ENCODE measurements at regions of chr1 and their contacts with region 1.

Region 1: DNA sequence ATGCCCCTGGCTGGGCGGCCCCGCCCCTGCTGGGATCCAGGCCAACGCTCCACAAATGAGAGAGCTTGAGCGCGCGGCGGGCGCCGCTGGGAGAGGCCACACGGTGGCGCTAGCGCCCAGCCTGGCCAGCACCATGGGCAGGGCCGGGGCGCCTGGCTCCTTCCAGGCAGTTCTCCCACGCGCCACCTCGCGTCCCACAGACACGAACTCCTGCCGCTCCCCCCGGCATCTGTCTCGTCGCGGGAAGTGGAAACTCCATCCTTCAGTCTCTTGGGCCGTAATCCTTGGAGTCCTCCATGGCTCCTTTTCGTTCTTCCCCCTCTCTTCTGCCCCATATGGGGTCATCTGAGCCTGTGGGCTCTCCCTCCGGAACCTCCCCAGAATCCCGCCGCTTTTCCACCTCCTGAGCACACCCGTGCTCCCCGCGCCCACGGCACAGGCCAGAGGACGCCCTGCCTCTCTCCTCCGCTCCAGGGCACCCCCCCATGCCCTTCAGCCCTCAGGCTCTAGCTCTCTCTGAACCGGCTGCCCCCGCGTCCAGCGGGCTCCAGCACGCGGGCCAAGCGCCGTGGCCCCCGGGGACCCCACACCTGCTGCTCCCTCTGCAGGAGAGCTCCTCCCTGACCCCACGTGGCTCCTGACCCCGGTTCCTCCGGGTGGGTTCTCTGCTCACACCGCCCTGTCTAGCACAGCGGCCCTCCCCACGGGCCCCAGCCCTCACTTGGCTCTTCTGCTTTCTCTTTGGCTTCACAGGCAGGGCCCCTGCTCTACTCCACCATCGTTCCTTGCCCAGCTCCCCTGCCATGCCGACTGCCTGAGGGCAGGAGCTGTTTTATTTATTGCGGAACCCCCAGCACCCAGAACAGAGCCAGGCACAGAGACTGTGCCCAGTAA is 31.9 kb upstream of the EDN2 start:
- DNase-seq: peak; percentile 97
- H3K4me3 ChIP-seq: peak overlapping the region; percentile 21 to 44; a peak in 2 of 4 replicates
- H3K27ac ChIP-seq: no peak overlapping the region; a peak in 1 of 4 replicates
- H3K4me1 ChIP-seq: peaks cover 4 to 48% of the 10 kb centered on the region in 2 experiments; a peak in 3 of 4 replicates
- H3K27me3 ChIP-seq: no peaks in the 10 kb centered on the region
- CTCF ChIP-seq: peak; percentile 73
- EP300 ChIP-seq: peak in 1 of 2 experiments; percentile 9; a peak in 1 of 4 replicates
- RAD21 ChIP-seq: peak; percentile 76

Region 2: GRCh38 chr1:40668769-40669525 is 847.5 kb before region 1 on chr1:
- CTCF ChIA-PET with region 1: no interaction called
- POLR2A ChIA-PET with region 1: no interaction called
- DNase-seq: peak; percentile 85
- H3K4me3 ChIP-seq: peak overlapping the region; percentile 23 to 33; a peak in 2 of 4 replicates
- H3K27ac ChIP-seq: no peak overlapping the region
- H3K4me1 ChIP-seq: peaks cover 2 to 20% of the 10 kb centered on the region in 2 experiments; a peak in 1 of 4 replicates
- H3K27me3 ChIP-seq: no peaks in the 10 kb centered on the region
- CTCF ChIP-seq: peak; percentile 90
- EP300 ChIP-seq: no peak
- RAD21 ChIP-seq: peak; percentile 82

Region 3: GRCh38 chr1:41444246-41444645 is 72.2 kb before region 1 on chr1:
- CTCF ChIA-PET with region 1: interaction called, 11 read pairs
- POLR2A ChIA-PET with region 1: no interaction called
- DNase-seq: no peak
- H3K4me3 ChIP-seq: no peak overlapping the region
- H3K27ac ChIP-seq: no peak overlapping the region
- H3K4me1 ChIP-seq: peaks cover 21 to 39% of the 10 kb centered on the region in 2 experiments
- H3K27me3 ChIP-seq: no peaks in the 10 kb centered on the region
- CTCF ChIP-seq: peak; percentile 41
- EP300 ChIP-seq: no peak
- RAD21 ChIP-seq: no peak

Region 4: GRCh38 chr1:41484372-41485241 is 31.8 kb before region 1 on chr1 and contains the start of gene EDN2:
- CTCF ChIA-PET with region 1: interaction called, 14 read pairs
- POLR2A ChIA-PET with region 1: no interaction called
- DNase-seq: peak; percentile 76
- H3K4me3 ChIP-seq: no peak within 1 kb of the TSS
- H3K27ac ChIP-seq: peak within 1 kb of the TSS; percentile 70 to 87
- H3K4me1 ChIP-seq: peaks cover 60 to 63% of the 10 kb centered on the region in 2 experiments
- H3K27me3 ChIP-seq: no peaks in the 10 kb centered on the region
- CTCF ChIP-seq: peak; percentile 30
- EP300 ChIP-seq: no peak
- RAD21 ChIP-seq: peak; percentile 28
- polyA plus RNA-seq, gene EDN2: 0.97 and 1.7 TPM in 2 replicates

Region 5: DNA sequence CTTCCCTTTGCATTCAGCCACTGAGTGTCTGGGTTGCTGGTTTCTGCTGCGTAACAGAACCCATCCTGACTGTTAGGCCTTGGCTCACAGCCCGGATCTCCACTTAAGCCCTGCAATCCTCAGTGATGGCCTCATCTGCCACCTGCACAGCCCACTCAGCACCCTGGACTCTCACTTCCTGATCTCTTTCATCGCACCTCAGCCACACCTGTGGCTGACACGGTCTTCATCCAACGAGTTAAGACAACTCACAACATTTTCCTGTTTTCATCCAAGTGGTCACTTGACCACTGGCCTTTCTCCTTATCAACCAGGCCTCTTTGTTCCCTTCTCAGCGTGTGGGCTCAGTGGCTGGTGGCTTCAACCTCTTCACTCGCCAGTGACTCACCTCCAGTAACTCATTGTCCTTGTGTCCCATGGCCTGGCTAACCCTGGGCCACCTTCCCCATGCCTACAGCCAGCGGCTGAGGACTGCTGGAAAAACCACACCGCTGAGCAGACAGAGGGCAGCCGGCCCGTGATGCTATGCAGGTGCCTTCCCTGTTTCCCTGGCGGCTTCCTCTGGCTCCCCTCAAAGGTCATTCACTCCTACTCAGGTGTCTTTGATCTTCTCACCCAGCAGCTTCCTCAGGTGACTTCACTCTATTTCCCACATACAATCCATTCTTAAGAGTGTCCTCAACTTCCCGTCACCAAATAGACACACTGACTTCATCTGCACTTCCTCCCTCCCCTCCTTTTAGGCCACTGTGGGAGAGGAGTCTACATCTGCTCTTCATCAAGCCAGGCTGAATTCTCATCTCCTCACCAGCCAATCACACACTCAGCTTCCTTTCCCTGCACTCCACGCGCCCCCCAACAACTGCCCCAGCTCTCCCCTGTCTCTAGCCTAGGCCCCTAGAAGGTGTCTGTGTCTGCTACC is 12.0 kb before region 1 on chr1:
- CTCF ChIA-PET with region 1: interaction called, 18 read pairs
- POLR2A ChIA-PET with region 1: no interaction called
- DNase-seq: no peak
- H3K4me3 ChIP-seq: no peak overlapping the region
- H3K27ac ChIP-seq: peak overlapping the region; percentile 30 to 98; a peak in 3 of 4 replicates
- H3K4me1 ChIP-seq: peaks cover 9 to 84% of the 10 kb centered on the region in 2 experiments
- H3K27me3 ChIP-seq: no peaks in the 10 kb centered on the region
- CTCF ChIP-seq: no peak
- EP300 ChIP-seq: no peak
- RAD21 ChIP-seq: no peak

Region 6: DNA sequence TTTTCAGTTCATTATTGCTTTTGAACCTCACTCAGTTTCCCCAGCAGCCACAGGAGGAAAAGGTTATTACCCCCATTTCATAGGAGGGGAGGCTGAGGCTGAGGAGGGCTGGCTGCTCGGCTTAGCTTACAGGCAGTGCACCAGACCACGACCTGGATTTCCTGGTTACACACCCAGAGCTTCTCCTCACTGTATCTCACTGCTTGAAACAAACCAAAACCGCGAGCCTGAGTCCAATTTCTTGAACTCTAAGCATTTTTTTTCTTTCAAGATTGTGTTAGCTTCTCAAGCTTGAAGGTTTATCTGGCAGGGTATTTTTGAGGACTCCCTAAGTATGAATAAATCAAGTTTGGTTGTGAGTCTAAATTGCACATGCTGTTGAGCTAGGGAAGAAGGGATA is 157.0 kb after region 1 on chr1:
- CTCF ChIA-PET with region 1: interaction called, 11 read pairs
- POLR2A ChIA-PET with region 1: no interaction called
- DNase-seq: no peak
- H3K4me3 ChIP-seq: no peak overlapping the region
- H3K27ac ChIP-seq: no peak overlapping the region
- H3K4me1 ChIP-seq: peaks cover 13 to 15% of the 10 kb centered on the region in 2 experiments; a peak in 2 of 4 replicates
- H3K27me3 ChIP-seq: no peaks in the 10 kb centered on the region
- CTCF ChIP-seq: no peak
- EP300 ChIP-seq: no peak
- RAD21 ChIP-seq: no peak

Measured in SK-N-SH (cell line).